ENCODE measurements at regions of chr7 and their contacts with region 1.

Region 1: GRCh38 chr7:44449584-44449928 is 40.9 kb downstream of the NUDCD3 start:
- DNase-seq: no peak
- ATAC-seq: no peak
- H3K4me3 ChIP-seq: no peak overlapping the region
- H3K27ac ChIP-seq: no peak overlapping the region
- H3K4me1 ChIP-seq: peaks cover 69% of the 10 kb centered on the region
- H3K27me3 ChIP-seq: no peaks in the 10 kb centered on the region
- CTCF ChIP-seq: no peak

Region 2: GRCh38 chr7:44333911-44334733 is 115.4 kb before region 1 on chr7:
- intact Hi-C with region 1: no loop called
- DNase-seq: no peak
- ATAC-seq: peak in 1 of 4 donors; percentile 46
- H3K4me3 ChIP-seq: no peak overlapping the region
- H3K27ac ChIP-seq: no peak overlapping the region
- H3K4me1 ChIP-seq: peaks cover 5% of the 10 kb centered on the region
- H3K27me3 ChIP-seq: no peaks in the 10 kb centered on the region
- CTCF ChIP-seq: no peak

Region 3: DNA sequence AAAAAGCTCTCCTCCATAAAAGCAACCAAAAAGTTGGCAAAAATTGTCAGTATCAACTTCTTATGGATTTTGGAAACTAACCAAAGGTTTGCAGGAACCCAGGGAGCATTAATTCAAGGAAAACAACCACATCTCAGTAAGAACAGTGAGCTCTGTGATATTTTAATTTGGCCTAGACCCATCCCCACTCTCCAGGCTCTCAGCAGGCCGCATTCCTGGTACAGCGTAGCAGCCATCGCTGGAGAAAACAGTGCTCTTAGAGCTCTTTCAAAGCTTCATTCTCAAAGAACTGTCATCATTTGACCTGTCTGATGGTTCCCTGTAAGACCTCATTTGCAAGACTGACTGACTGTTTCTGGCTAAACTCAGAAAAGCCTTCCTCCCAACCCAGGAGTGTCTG is 41.0 kb before region 1 on chr7:
- intact Hi-C with region 1: loop called in 1 of 2 experiments (anchors 5 kb)
- DNase-seq: no peak
- ATAC-seq: no peak
- H3K4me3 ChIP-seq: no peak overlapping the region
- H3K27ac ChIP-seq: no peak overlapping the region
- H3K4me1 ChIP-seq: peaks cover 7% of the 10 kb centered on the region
- H3K27me3 ChIP-seq: no peaks in the 10 kb centered on the region
- CTCF ChIP-seq: no peak

Measured in psoas muscle (tissue), 8 donors.